ENCODE measurements at regions of chr19 and their contacts with region 1.

Region 1: GRCh38 chr19:8545743-8546142 is 31.5 kb downstream of the MYO1F start:
- DNase-seq: no peak
- H3K4me3 ChIP-seq: no peak overlapping the region
- H3K27ac ChIP-seq: no peak overlapping the region
- H3K4me1 ChIP-seq: no peaks in the 10 kb centered on the region
- H3K27me3 ChIP-seq: no peaks in the 10 kb centered on the region
- CTCF ChIP-seq: no peak
- POLR2A ChIP-seq: no peak

Region 2: GRCh38 chr19:10416380-10417257 is 1870.9 kb after region 1 on chr19:
- intact Hi-C with region 1: loop called (anchors 5 kb)
- DNase-seq: peak; percentile 69 to 74
- H3K4me3 ChIP-seq: peak overlapping the region; percentile 24 to 69 (median 48)
- H3K27ac ChIP-seq: peak overlapping the region in 1 of 2 donors; percentile 16
- H3K4me1 ChIP-seq: peaks cover 8 to 14% of the 10 kb centered on the region in 2 donors
- H3K27me3 ChIP-seq: peaks cover 21 to 48% of the 10 kb centered on the region in 2 donors
- CTCF ChIP-seq: peak; percentile 58 to 82 (median 75)
- POLR2A ChIP-seq: no peak